ENCODE measurements at regions of chr3 and their contacts with region 1.

Region 1: GRCh38 chr3:150349314-150350097 is 58.6 kb upstream of the TSC22D2 start:
- DNase-seq: no peak
- ATAC-seq: no peak
- H3K4me3 ChIP-seq: no peak overlapping the region
- H3K27ac ChIP-seq: no peak overlapping the region
- H3K4me1 ChIP-seq: no peaks in the 10 kb centered on the region
- H3K27me3 ChIP-seq: no peaks in the 10 kb centered on the region; a peak in 1 of 4 replicates
- CTCF ChIP-seq: no peak
- EP300 ChIP-seq: no peak
- POLR2A ChIP-seq: no peak
- RAD21 ChIP-seq: no peak

Region 2: GRCh38 chr3:150861851-150862250 is 512.3 kb after region 1 on chr3:
- CTCF ChIA-PET with region 1: no interaction called
- POLR2A ChIA-PET with region 1: no interaction called
- RAD21 ChIA-PET with region 1: no interaction called
- SMC1A ChIA-PET with region 1: no interaction called
- in situ Hi-C with region 1: no loop called
- intact Hi-C with region 1: no loop called
- DNase-seq: no peak
- ATAC-seq: no peak
- H3K4me3 ChIP-seq: no peak overlapping the region
- H3K27ac ChIP-seq: no peak overlapping the region
- H3K4me1 ChIP-seq: no peaks in the 10 kb centered on the region
- H3K27me3 ChIP-seq: no peaks in the 10 kb centered on the region; a peak in 1 of 4 replicates
- CTCF ChIP-seq: no peak
- EP300 ChIP-seq: no peak
- POLR2A ChIP-seq: no peak
- RAD21 ChIP-seq: no peak

Region 3: DNA sequence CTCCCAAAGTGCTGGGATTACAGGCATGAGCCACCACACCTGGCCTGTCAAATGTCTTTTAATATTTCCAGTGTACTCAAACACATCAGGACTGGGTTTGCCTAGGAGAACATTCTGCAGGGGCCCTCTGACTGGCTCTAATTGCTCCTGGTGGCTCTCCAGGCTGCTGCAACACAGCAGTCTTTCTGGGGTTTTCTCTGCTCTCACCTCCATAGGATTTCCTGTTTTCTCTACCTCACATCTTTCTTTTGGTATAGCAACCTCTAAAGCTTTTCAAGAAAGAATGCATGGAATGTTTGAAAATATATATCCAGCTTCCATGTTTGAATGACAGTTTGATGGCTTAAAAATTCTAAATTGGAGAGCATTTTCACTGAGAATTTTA is 1194.7 kb after region 1 on chr3:
- CTCF ChIA-PET with region 1: no interaction called
- POLR2A ChIA-PET with region 1: no interaction called
- RAD21 ChIA-PET with region 1: no interaction called
- SMC1A ChIA-PET with region 1: no interaction called
- in situ Hi-C with region 1: no loop called
- intact Hi-C with region 1: loop called (anchors 10 kb)
- DNase-seq: no peak
- ATAC-seq: 0 out of 3 replicates have a peak, but pooled peaks have one; percentile 35
- H3K4me3 ChIP-seq: no peak overlapping the region
- H3K27ac ChIP-seq: no peak overlapping the region
- H3K4me1 ChIP-seq: no peaks in the 10 kb centered on the region
- H3K27me3 ChIP-seq: no peaks in the 10 kb centered on the region
- CTCF ChIP-seq: no peak
- EP300 ChIP-seq: no peak
- POLR2A ChIP-seq: no peak
- RAD21 ChIP-seq: no peak

Measured in GM12878 (cell line).